IMR-90 (cell line): ENCODE measurements at regions of chr6 and their contacts with region 1.

Region 1: DNA sequence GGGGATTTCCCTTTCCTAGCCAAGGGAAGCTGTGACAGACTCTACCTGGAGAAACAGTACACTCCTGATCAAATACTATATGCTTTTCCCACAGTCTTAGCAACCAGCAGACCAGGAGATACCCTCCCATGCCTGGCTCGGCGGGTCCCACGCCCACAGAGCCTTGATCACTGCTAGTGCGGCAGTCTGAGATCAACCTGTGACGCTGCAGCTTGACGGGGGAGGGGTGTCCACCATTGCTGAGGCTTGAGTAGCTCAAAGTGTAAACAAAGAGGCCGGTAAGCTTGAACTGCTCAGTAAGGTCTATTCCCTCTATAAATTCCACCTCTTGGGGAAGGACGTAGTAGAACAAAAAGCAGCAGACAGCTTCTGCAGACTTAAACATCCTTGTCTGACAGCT is 63.2 kb downstream of the WASF1 start:
- DNase-seq: no peak
- ATAC-seq: no peak
- H3K4me3 ChIP-seq: no peak overlapping the region
- H3K27ac ChIP-seq: no peak overlapping the region
- H3K4me1 ChIP-seq: no peaks in the 10 kb centered on the region
- H3K27me3 ChIP-seq: no peaks in the 10 kb centered on the region
- CTCF ChIP-seq: no peak
- POLR2A ChIP-seq: no peak
- RAD21 ChIP-seq: no peak

Region 2: GRCh38 chr6:110173506-110174132 is 57.4 kb after region 1 on chr6:
- CTCF ChIA-PET with region 1: interaction called, 5 read pairs
- POLR2A ChIA-PET with region 1: no interaction called
- dilution Hi-C with region 1: no loop called
- in situ Hi-C with region 1: no loop called
- intact Hi-C with region 1: loop called (anchors 5 kb)
- DNase-seq: peak; percentile 1
- ATAC-seq: 0 out of 2 replicates have a peak, but pooled peaks have one; percentile 17
- H3K4me3 ChIP-seq: no peak overlapping the region
- H3K27ac ChIP-seq: no peak overlapping the region
- H3K4me1 ChIP-seq: no peaks in the 10 kb centered on the region
- H3K27me3 ChIP-seq: no peaks in the 10 kb centered on the region
- CTCF ChIP-seq: no peak
- POLR2A ChIP-seq: no peak
- RAD21 ChIP-seq: no peak